ENCODE measurements at regions of chr2 and their contacts with region 1.

Region 1: GRCh38 chr2:208254871-208255556 is at the start of gene IDH1:
- DNase-seq: peak; percentile 91 to 98
- H3K4me3 ChIP-seq: peak within 1 kb of the TSS; percentile 73
- H3K27ac ChIP-seq: peak within 1 kb of the TSS; percentile 54 to 62
- H3K4me1 ChIP-seq: peaks cover 0 to 21% of the 10 kb centered on the region in 2 donors
- H3K27me3 ChIP-seq: no peaks in the 10 kb centered on the region
- CTCF ChIP-seq: peak in 2 of 3 experiments; percentile 35 to 47
- total RNA-seq, gene IDH1: 25.9 TPM

Region 2: GRCh38 chr2:206765242-206766056 is 1489.6 kb before region 1 on chr2 and contains the starts of genes FASTKD2 and MDH1B:
- intact Hi-C with region 1: loop called (anchors 5 kb)
- DNase-seq: peak; percentile 77 to 97
- H3K4me3 ChIP-seq: peak within 1 kb of the TSS; percentile 85 to 92
- H3K27ac ChIP-seq: peak within 1 kb of the TSS; percentile 85 to 90
- H3K4me1 ChIP-seq: peaks cover 5 to 24% of the 10 kb centered on the region in 2 donors
- H3K27me3 ChIP-seq: no peaks in the 10 kb centered on the region
- CTCF ChIP-seq: no peak
- total RNA-seq, gene FASTKD2: 41.5 TPM
- total RNA-seq, gene MDH1B: not detected

Region 3: DNA sequence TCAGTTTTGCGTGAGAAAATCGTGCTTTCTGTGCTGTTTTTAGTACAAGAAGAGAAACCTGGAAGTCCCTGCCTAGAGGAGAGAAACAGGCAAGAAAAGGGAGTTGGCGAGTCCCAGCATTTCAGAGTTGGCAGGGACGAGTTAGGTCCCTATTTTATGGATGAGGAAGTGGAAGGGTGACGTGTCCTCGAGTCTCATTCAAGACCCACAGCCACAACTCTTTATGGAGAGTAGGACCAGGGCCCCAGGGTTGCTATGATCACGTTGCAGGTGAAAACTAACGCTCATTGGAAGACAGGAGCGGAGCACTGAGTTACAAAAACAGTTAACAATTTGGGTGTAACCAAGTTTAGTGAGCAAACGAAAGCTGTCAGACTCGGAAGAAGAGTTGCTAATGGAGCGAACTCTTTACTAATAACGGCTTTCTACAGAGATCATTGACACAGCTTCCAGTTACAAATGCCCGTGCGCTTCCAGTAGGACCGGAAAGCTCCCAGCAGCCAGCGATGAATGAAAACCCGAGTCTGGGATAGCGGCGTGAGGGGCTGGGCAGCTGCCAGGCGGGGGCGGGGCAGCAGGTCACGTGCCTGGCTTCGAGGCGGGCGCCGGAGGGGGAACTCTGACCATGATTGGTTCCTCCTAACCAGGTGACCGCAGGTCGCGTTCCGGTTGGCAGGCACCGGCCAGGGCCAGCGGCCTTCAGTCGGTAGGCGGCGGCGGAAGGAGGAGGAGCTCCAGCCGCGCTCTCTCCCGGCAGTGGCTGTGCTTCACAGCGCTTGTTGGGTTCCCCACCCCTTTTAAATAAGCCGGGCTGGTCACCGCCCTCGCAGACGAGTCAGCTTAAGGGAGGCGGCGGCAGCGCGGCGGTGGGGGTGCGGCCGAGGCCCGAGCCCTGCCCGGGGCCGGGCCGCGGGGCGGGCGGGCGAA is 543.9 kb before region 1 on chr2 and contains the start of gene CCNYL1:
- intact Hi-C with region 1: loop called (anchors 5 kb)
- DNase-seq: peak; percentile 95 to 99
- H3K4me3 ChIP-seq: peak within 1 kb of the TSS; percentile 75 to 92
- H3K27ac ChIP-seq: peak within 1 kb of the TSS; percentile 88 to 90
- H3K4me1 ChIP-seq: peaks cover 0 to 6% of the 10 kb centered on the region in 2 donors
- H3K27me3 ChIP-seq: no peaks in the 10 kb centered on the region
- CTCF ChIP-seq: peak; percentile 17 to 55 (median 17)
- total RNA-seq, gene CCNYL1: 12.3 TPM

Region 4: GRCh38 chr2:207769597-207770486 is 485.2 kb before region 1 on chr2 and contains the start of gene FZD5:
- intact Hi-C with region 1: loop called (anchors 5 kb)
- DNase-seq: peak; percentile 87 to 98
- H3K4me3 ChIP-seq: peak within 1 kb of the TSS; percentile 75 to 83
- H3K27ac ChIP-seq: peak within 1 kb of the TSS; percentile 61 to 65
- H3K4me1 ChIP-seq: peaks cover 8 to 9% of the 10 kb centered on the region in 2 donors
- H3K27me3 ChIP-seq: no peaks in the 10 kb centered on the region
- CTCF ChIP-seq: peak; percentile 45 to 68 (median 47)
- total RNA-seq, gene FZD5: 6.9 TPM

Region 5: GRCh38 chr2:207879536-207879935 is 375.5 kb before region 1 on chr2:
- intact Hi-C with region 1: no loop called
- DNase-seq: no peak
- H3K4me3 ChIP-seq: no peak overlapping the region
- H3K27ac ChIP-seq: no peak overlapping the region
- H3K4me1 ChIP-seq: peaks cover 3 to 6% of the 10 kb centered on the region in 2 donors
- H3K27me3 ChIP-seq: no peaks in the 10 kb centered on the region
- CTCF ChIP-seq: no peak

Region 6: GRCh38 chr2:208129744-208130711 is 125.0 kb before region 1 on chr2 and contains the start of gene CRYGC:
- intact Hi-C with region 1: no loop called
- DNase-seq: no peak
- H3K4me3 ChIP-seq: no peak within 1 kb of the TSS
- H3K27ac ChIP-seq: no peak within 1 kb of the TSS
- H3K4me1 ChIP-seq: no peaks in the 10 kb centered on the region
- H3K27me3 ChIP-seq: no peaks in the 10 kb centered on the region
- CTCF ChIP-seq: no peak
- total RNA-seq, gene CRYGC: not detected

Region 7: GRCh38 chr2:208175069-208175839 is 79.8 kb before region 1 on chr2:
- intact Hi-C with region 1: loop called (anchors 1 kb)
- DNase-seq: peak; percentile 35 to 88
- H3K4me3 ChIP-seq: no peak overlapping the region
- H3K27ac ChIP-seq: no peak overlapping the region
- H3K4me1 ChIP-seq: no peaks in the 10 kb centered on the region
- H3K27me3 ChIP-seq: no peaks in the 10 kb centered on the region
- CTCF ChIP-seq: peak; percentile 61 to 87 (median 78)

Region 8: GRCh38 chr2:208265801-208266552 is 11.0 kb after region 1 on chr2 and contains the start of gene PIKFYVE:
- intact Hi-C with region 1: loop called (anchors 1 kb)
- DNase-seq: peak; percentile 88 to 98
- H3K4me3 ChIP-seq: peak within 1 kb of the TSS; percentile 93 to 100
- H3K27ac ChIP-seq: peak within 1 kb of the TSS; percentile 97 to 98
- H3K4me1 ChIP-seq: peaks cover 0 to 21% of the 10 kb centered on the region in 2 donors
- H3K27me3 ChIP-seq: no peaks in the 10 kb centered on the region
- CTCF ChIP-seq: no peak
- total RNA-seq, gene PIKFYVE: 12.0 TPM

Region 9: GRCh38 chr2:208315081-208315788 is 60.2 kb after region 1 on chr2:
- intact Hi-C with region 1: loop called (anchors 5 kb)
- DNase-seq: no peak
- H3K4me3 ChIP-seq: no peak overlapping the region
- H3K27ac ChIP-seq: peak overlapping the region in 1 of 2 donors; percentile 26
- H3K4me1 ChIP-seq: peaks cover 0 to 11% of the 10 kb centered on the region in 2 donors
- H3K27me3 ChIP-seq: no peaks in the 10 kb centered on the region
- CTCF ChIP-seq: no peak